ENCODE measurements at regions of chr6 and their contacts with region 1.

Region 1: GRCh38 chr6:52419809-52420670 is at the start of gene EFHC1:
- DNase-seq: peak; percentile 95
- CTCF ChIP-seq: no peak

Region 2: DNA sequence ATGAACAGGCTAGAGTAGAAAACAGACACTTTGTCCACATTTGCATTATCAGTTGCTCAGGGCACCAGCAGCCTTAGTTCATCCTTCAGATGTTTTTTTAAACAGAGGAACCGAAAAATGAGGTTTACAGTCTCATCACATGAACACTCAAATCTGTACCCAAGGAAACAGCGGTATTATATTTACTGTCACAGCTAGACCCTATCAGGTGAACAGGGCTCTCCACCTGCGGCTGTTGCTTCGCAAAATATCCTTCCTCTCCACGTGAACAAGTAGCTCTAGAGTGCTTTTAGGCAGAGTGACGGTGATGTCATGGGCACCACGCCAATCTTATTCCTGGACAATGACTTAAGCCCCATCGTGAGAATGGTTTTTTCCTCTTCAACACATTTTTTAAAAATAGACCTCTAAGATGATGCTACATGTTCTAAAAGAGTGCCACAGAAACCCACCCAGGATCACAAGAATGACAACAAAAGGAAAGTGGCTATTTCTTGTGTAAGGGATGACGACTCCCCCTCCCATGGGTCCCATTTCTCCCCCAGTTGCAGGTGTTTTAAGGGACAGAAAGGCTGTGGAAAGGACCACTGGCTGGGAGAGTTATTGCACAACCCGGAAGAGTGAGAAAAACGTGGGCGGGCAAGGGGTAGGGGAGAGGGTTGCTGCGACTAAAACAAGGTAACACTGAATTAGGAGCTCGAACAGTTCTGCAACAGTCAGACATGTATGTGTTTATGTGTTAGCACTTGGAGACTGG is 77.8 kb after region 1 on chr6:
- in situ Hi-C with region 1: loop called (anchors 5 kb)
- DNase-seq: peak; percentile 61
- CTCF ChIP-seq: no peak

Region 3: DNA sequence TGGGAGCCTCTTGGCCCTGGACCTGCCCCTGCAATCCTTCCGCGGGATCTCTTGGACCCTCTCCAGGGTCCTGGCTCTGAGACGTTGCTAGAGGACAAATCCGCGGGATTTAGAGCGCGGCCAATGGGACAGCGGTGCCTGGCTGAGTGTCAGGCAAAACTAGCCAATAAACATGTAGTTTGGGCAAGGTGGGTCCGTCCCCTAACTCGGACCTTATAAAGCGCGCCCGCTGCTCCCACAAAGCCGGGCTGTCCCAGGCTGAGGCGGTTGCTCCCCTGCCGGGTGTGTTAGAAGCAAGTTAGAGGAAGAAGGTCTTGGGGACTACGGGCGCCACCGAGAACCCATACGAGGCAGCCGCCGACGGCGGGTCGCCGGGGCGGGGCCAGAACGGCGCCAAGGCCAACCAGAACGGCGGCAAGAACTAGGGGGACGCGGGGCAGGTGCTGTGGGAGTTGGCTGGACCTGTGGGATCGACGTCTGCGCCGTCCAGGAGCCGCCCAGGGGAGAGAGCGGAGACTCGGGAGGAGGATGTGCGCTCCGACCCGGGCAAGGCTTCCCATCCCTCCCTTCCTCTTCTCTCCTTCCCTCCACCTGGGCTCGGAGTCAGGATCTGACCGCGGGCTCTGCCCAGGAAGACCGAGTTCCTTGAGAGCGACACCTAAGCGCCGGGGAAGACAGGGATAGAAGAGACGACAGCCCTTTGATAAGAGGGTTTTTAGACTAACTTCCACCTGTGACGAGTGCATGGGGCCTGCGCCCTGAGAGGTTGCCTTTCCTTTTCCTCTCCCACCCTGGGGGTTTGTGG is 244.3 kb after region 1 on chr6:
- in situ Hi-C with region 1: loop called (anchors 5 kb)
- DNase-seq: peak; percentile 96
- CTCF ChIP-seq: no peak

Region 4: GRCh38 chr6:52872031-52872430 is 452.0 kb after region 1 on chr6:
- in situ Hi-C with region 1: no loop called
- DNase-seq: no peak
- CTCF ChIP-seq: no peak

Measured in GM13976 (cell line).